PC-3 (cell line): ENCODE measurements at regions of chr9 and their contacts with region 1.

Region 1: GRCh38 chr9:115456515-115456914 is 338.6 kb upstream of the TNC start:
- DNase-seq: no peak
- ATAC-seq: no peak
- H3K4me3 ChIP-seq: no peak overlapping the region
- H3K27ac ChIP-seq: no peak overlapping the region
- H3K4me1 ChIP-seq: no peaks in the 10 kb centered on the region
- H3K27me3 ChIP-seq: no peaks in the 10 kb centered on the region
- CTCF ChIP-seq: no peak

Region 2: GRCh38 chr9:115400796-115401195 is 55.7 kb before region 1 on chr9:
- CTCF ChIA-PET with region 1: no interaction called
- POLR2A ChIA-PET with region 1: no interaction called
- intact Hi-C with region 1: loop called (anchors 10 kb)
- DNase-seq: no peak
- ATAC-seq: no peak
- H3K4me3 ChIP-seq: no peak overlapping the region
- H3K27ac ChIP-seq: no peak overlapping the region
- H3K4me1 ChIP-seq: peaks cover 25% of the 10 kb centered on the region
- H3K27me3 ChIP-seq: no peaks in the 10 kb centered on the region
- CTCF ChIP-seq: no peak